K562 (cell line): ENCODE measurements at regions of chr6 and their contacts with region 1.

Region 1: GRCh38 chr6:35064757-35065440 is 76.2 kb downstream of the TCP11 start:
- DNase-seq: peak in 2 of 4 experiments; percentile 31 to 52
- ATAC-seq: peak; percentile 35; the same call in 2 of the 3 replicates
- H3K4me3 ChIP-seq: no peak overlapping the region
- H3K27ac ChIP-seq: no peak overlapping the region
- H3K4me1 ChIP-seq: peaks cover 0 to 3% of the 10 kb centered on the region in 2 experiments; a peak in 1 of 5 replicates
- H3K27me3 ChIP-seq: no peaks in the 10 kb centered on the region
- CTCF ChIP-seq: peak in 1 of 3 experiments; percentile 22; a peak in 1 of 6 replicates
- EP300 ChIP-seq: no peak
- POLR2A ChIP-seq: no peak
- RAD21 ChIP-seq: no peak

Region 2: GRCh38 chr6:35052694-35053565 is 12.0 kb before region 1 on chr6:
- CTCF ChIA-PET with region 1: no interaction called
- POLR2A ChIA-PET with region 1: interaction called, 13 read pairs
- in situ Hi-C with region 1: no loop called
- intact Hi-C with region 1: no loop called
- DNase-seq: no peak
- ATAC-seq: no peak; the same call in 2 of the 3 replicates
- H3K4me3 ChIP-seq: no peak overlapping the region
- H3K27ac ChIP-seq: no peak overlapping the region
- H3K4me1 ChIP-seq: peaks cover 0 to 5% of the 10 kb centered on the region in 2 experiments; a peak in 4 of 5 replicates
- H3K27me3 ChIP-seq: no peaks in the 10 kb centered on the region
- CTCF ChIP-seq: no peak
- EP300 ChIP-seq: no peak
- POLR2A ChIP-seq: no peak
- RAD21 ChIP-seq: no peak

Region 3: GRCh38 chr6:35108309-35108885 is 43.5 kb after region 1 on chr6:
- CTCF ChIA-PET with region 1: no interaction called
- POLR2A ChIA-PET with region 1: no interaction called
- in situ Hi-C with region 1: no loop called
- intact Hi-C with region 1: no loop called
- DNase-seq: no peak
- ATAC-seq: no peak
- H3K4me3 ChIP-seq: no peak overlapping the region
- H3K27ac ChIP-seq: no peak overlapping the region
- H3K4me1 ChIP-seq: no peaks in the 10 kb centered on the region
- H3K27me3 ChIP-seq: peaks cover 2 to 14% of the 10 kb centered on the region in 2 experiments; a peak in 3 of 5 replicates
- CTCF ChIP-seq: no peak
- EP300 ChIP-seq: no peak
- POLR2A ChIP-seq: no peak
- RAD21 ChIP-seq: no peak